GM18951 (cell line): ENCODE measurements at regions of chr20 and their contacts with region 1.

Region 1: DNA sequence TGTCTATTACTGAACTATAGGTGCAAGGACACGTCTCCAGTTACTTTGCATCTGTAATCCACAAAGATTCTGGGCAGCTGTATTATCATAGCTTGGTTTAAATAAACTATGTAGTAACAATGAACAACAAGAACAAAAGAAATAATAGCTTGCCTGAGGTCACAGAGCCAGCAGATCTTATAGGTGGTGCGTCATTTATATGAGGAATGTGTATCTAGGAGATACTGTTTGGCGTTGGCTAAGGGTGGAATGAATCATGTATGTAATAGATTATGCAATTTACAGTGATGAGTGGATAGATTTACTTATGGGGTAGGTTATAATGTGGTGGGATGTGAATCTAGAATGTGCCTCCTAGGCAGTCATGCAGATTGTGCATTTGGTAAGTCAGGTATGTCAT is 42.8 kb downstream of the HNF4A start:
- POLR2A ChIP-seq: no peak

Region 2: DNA sequence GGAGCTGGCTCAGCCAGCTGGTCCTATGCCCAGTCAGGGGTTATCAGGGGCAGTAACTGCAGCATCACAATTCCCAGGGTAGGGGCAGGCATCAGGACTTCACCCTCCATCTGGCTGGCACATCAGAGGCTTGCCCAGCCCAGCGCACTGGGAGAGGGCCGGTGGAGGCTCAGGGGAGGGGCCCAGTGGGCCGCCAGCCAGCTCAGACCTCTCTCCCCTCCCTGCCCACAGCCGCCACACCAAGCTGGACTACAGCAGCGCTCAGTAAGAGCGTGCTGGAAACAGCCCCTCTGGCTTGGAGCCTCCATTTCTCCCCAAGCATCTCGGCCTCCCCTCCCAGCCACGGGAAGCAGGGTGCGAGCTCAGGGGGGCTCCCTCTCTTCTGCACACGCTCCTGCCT is 231.2 kb after region 1 on chr20:
- in situ Hi-C with region 1: loop called (anchors 10 kb)
- POLR2A ChIP-seq: no peak